Natural killer cell (primary cell): ENCODE measurements at regions of chr1 and their contacts with region 1.

Region 1: GRCh38 chr1:184465489-184466146 is 78.8 kb downstream of the C1orf21 start:
- DNase-seq: peak; percentile 36 to 45
- ATAC-seq: peak; percentile 93 to 99 (median 99)
- H3K4me3 ChIP-seq: no peak overlapping the region
- H3K4me3 Mint-ChIP-seq: no peak overlapping the region
- H3K27ac ChIP-seq: no peak overlapping the region
- H3K27ac Mint-ChIP-seq: peak overlapping the region; percentile 28 to 72
- H3K4me1 ChIP-seq: peaks cover 5% of the 10 kb centered on the region
- H3K4me1 Mint-ChIP-seq: peaks cover 71 to 72% of the 10 kb centered on the region in 2 donors
- H3K27me3 ChIP-seq: no peaks in the 10 kb centered on the region
- H3K27me3 Mint-ChIP-seq: no peaks in the 10 kb centered on the region
- CTCF ChIP-seq: peak; percentile 92

Region 2: DNA sequence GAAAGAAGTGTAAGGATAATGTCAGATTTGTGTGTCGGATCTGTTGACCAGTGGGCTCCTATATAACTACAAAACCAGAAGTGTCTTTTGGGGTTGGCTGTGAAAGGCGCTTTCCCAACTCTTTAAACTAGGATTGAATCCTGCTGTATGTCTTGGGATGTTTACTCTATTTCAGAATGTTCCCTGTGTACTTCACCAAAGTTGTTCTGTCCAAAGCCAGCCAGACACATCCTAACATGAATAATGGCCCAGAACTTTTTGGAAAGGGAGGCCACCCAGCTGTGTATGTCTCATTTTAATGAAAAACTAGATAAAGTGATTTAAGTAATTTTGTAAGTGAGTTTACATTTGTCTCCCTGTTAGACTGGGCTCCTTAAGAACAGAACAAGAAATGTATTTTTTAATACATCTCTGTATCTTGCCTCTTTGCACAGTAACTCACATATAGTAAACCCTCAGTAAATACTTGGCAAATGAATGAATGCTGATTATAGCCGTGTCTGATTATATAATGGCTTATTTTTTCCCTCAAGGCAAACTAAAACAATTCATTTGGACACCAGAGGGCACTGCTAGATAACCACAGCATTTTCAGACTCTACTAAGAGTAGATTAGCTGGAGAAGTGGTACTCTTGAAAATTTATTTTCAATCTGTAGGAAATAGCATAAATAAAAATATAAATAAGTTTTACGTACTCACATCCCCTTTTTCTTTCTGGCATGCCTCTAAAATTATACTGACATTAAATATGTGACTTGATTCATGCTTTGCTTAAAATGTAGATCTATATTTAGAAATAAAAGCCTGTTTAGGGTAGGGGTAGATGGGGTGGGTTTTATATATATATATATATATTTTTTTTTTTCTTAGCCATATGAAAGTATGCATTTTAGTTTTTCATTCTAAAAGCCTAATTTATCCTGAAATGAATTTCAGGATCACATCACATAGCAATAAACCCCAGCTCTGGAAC is 390.3 kb before region 1 on chr1:
- intact Hi-C with region 1: loop called (anchors 1 kb)
- DNase-seq: peak in 1 of 2 donors; percentile 61
- ATAC-seq: peak; percentile 52 to 71 (median 64)
- H3K4me3 ChIP-seq: no peak overlapping the region
- H3K4me3 Mint-ChIP-seq: no peak overlapping the region
- H3K27ac ChIP-seq: no peak overlapping the region
- H3K27ac Mint-ChIP-seq: peak overlapping the region in 1 of 2 donors; percentile 47
- H3K4me1 ChIP-seq: no peaks in the 10 kb centered on the region
- H3K4me1 Mint-ChIP-seq: peaks cover 4 to 5% of the 10 kb centered on the region in 2 donors
- H3K27me3 ChIP-seq: no peaks in the 10 kb centered on the region
- H3K27me3 Mint-ChIP-seq: no peaks in the 10 kb centered on the region
- CTCF ChIP-seq: peak; percentile 67

Region 3: DNA sequence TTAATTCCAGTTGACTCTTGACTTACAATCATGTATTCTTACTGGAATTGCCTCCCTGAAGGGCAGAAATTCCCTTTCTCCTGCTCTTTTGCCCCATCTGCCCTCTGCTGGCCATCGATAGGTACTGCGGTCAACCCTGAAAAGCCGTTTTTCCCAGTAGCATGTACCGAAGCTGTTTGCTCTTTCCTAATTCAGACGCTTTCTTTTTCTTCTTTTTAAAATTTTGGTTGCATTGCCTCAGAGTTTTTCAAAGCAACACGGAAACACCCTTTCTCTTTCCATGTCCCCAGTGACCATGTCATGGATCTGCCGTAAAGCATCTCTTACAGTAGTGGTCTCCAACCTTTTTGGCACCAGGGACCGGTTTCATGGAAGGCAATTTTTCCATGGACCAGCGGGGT is 243.0 kb before region 1 on chr1:
- intact Hi-C with region 1: loop called (anchors 5 kb)
- DNase-seq: peak; percentile 39 to 63
- ATAC-seq: peak; percentile 60 to 76 (median 75)
- H3K4me3 ChIP-seq: no peak overlapping the region
- H3K4me3 Mint-ChIP-seq: peak overlapping the region; percentile 1
- H3K27ac ChIP-seq: no peak overlapping the region
- H3K27ac Mint-ChIP-seq: no peak overlapping the region
- H3K4me1 ChIP-seq: no peaks in the 10 kb centered on the region
- H3K4me1 Mint-ChIP-seq: peaks cover 0 to 5% of the 10 kb centered on the region in 2 donors
- H3K27me3 ChIP-seq: no peaks in the 10 kb centered on the region
- H3K27me3 Mint-ChIP-seq: peaks cover 10 to 18% of the 10 kb centered on the region in 2 donors
- CTCF ChIP-seq: peak; percentile 92

Region 4: DNA sequence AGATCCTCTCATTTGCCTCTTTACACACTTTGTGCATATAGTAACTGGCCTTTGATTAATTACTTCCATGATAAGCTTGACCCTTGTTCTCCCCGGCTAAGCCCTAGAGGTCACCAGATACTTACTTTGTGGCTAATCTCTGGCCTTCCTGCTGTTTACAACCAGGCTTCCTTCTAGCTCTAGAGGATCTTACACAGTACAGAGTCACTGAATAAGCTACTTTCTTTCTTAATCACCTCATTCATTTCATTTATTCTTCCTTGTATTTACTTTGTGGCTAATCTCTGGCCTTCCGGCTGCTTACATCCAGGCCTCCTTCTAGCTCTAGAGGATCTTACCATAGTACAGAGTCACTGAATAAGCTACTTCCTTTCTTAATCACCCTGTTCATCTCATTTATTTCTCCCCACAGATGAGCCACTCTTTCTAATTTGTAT is 223.1 kb before region 1 on chr1:
- intact Hi-C with region 1: loop called (anchors 5 kb)
- DNase-seq: no peak
- ATAC-seq: peak in 1 of 3 donors; percentile 50
- H3K4me3 ChIP-seq: no peak overlapping the region
- H3K4me3 Mint-ChIP-seq: no peak overlapping the region
- H3K27ac ChIP-seq: no peak overlapping the region
- H3K27ac Mint-ChIP-seq: no peak overlapping the region
- H3K4me1 ChIP-seq: no peaks in the 10 kb centered on the region
- H3K4me1 Mint-ChIP-seq: peaks cover 0 to 5% of the 10 kb centered on the region in 2 donors
- H3K27me3 ChIP-seq: no peaks in the 10 kb centered on the region
- H3K27me3 Mint-ChIP-seq: peaks cover 6 to 16% of the 10 kb centered on the region in 2 donors
- CTCF ChIP-seq: no peak

Region 5: GRCh38 chr1:184315254-184315653 is 150.4 kb before region 1 on chr1:
- intact Hi-C with region 1: loop called (anchors 10 kb)
- DNase-seq: no peak
- ATAC-seq: no peak
- H3K4me3 ChIP-seq: no peak overlapping the region
- H3K4me3 Mint-ChIP-seq: no peak overlapping the region
- H3K27ac ChIP-seq: no peak overlapping the region
- H3K27ac Mint-ChIP-seq: no peak overlapping the region
- H3K4me1 ChIP-seq: no peaks in the 10 kb centered on the region
- H3K4me1 Mint-ChIP-seq: no peaks in the 10 kb centered on the region
- H3K27me3 ChIP-seq: no peaks in the 10 kb centered on the region
- H3K27me3 Mint-ChIP-seq: peaks cover 16 to 18% of the 10 kb centered on the region in 2 donors
- CTCF ChIP-seq: no peak

Region 6: GRCh38 chr1:185759061-185759460 is 1293.4 kb after region 1 on chr1:
- intact Hi-C with region 1: no loop called
- DNase-seq: no peak
- ATAC-seq: no peak
- H3K4me3 ChIP-seq: no peak overlapping the region
- H3K4me3 Mint-ChIP-seq: no peak overlapping the region
- H3K27ac ChIP-seq: no peak overlapping the region
- H3K27ac Mint-ChIP-seq: no peak overlapping the region
- H3K4me1 ChIP-seq: no peaks in the 10 kb centered on the region
- H3K4me1 Mint-ChIP-seq: no peaks in the 10 kb centered on the region
- H3K27me3 ChIP-seq: peaks cover 10% of the 10 kb centered on the region
- H3K27me3 Mint-ChIP-seq: peaks cover 31 to 48% of the 10 kb centered on the region in 2 donors
- CTCF ChIP-seq: no peak